ENCODE measurements at regions of chrX and their contacts with region 1.

Region 1: DNA sequence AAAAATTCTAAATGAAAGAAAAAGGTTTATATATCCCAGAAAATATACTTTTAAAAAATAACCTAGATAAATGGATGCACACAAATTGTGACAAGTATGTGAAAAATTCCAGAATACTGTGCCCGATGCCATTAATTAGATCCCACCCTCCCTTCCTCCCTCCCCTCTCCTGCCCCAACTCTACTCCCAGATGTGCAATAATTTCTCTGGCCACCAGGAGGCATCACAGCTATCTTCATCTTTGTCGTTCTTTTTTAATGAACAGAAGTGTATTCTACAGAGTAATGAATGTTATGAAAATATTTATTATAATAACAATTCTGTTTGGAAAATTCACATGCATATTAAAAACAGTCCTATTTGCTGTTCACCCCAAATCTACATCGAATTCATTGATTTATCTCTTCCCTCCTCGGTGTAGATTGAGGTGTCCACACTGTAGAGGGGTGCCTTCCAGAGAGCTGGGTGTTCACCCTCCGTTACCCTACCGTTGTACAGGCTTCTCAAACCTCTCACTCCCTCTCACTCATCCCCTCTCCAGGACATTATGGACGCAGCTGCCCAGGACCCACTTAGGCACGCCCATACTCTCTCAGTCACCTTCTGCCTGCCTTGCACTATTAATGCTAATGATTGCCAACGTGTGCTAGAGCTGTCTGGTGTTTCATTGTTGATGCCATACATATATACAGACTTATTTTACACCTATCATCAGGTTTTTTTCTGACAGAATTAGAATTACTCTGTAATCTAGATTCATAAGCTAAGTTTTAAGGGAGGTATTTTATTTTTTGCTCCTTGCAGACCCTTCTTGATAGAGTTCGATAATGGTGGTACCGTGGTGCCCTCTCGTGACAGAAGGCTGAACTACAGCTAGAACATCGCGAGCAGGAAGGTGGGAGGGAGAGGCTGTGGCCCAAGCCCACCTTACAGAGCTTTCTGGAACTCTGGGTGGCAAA is 14.1 kb downstream of the RAB40AL start:
- DNase-seq: peak; percentile 27
- ATAC-seq: peak; percentile 53 to 58

Region 2: DNA sequence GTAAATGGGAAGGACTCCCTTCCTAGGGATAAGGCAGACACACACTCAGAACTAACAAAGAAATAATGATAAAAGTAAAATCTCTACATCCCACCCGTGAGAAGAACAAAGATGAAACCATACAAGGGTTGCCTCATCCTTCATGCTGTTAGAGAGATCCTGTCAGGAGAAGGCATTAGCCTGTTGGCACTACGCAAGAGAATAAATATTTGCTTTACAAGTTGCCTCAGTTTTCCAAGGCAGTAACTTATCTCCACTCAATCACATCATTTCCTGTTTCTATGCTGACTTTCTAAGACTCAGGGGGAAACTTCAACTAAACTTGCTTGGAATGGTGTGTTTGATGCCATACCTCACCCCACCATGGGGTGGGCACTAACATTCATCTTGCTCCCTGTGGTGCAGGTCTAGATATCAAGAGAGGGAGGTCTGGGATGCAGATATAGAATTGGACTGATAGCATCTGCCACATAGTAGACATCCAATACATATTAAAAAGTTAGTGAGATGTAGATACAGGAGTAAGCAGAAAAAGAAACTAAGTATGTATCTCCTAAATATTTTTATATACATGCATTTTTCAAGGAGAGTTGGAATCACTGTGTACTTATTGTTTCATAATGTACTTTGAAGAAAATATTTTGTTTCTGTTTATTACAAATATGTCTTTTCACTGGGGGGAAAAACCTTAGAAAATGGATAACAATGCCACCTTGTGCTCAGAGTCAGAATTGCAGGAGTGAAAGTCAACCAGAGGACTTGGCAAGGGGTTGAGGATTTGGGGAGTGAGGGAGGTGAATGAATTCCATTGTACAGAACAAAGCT is 206.5 kb after region 1 on chrX:
- intact Hi-C with region 1: loop called in 1 of 2 experiments (anchors 5 kb)
- DNase-seq: no peak
- ATAC-seq: no peak

Region 3: DNA sequence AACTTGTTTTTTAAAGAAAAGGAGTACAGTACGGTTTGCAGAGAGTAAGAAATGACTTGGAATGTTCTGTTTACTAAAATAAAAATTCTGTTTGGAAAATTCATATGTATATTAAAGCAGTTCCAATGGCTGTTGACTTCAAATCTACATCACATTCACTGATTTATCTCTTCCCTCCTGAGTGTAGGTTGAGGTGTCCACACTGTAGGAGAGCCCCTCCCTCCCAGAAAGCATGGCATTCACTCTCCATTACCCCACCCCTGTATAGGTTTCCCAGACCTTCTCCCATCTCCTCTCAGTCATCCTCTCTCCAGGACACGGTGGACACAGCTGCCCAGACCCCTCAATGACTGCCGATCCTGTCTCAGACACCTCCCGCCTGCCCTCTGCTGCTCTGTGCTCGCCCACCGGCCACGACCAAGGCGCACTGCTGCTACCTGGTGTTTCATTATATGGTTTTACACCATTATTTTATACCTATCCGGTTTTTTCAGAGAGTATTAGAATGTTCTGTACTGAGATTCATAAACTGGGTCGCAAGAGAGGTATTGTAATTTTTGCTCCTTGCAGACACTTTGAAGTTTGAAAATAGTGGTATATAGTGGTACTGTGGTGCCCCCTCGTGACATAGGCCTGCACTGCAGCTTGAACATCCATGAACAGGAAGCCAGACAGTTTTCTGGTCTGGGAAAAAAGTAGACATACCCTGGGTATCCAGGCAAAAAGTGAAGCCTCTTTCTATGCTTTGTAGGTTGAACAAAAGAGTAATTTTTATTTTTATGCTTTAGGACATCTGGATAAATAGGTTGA is 225.0 kb after region 1 on chrX:
- intact Hi-C with region 1: loop called in 1 of 2 experiments (anchors 5 kb)
- DNase-seq: peak; percentile 58
- ATAC-seq: peak in 1 of 2 donors; percentile 47

Measured in left cardiac atrium (tissue), 4 donors.